ENCODE measurements at regions of chr19 and their contacts with region 1.

Region 1: GRCh38 chr19:6138066-6138465 is 2.6 kb downstream of the ACSBG2 start:
- DNase-seq: no peak
- H3K4me3 ChIP-seq: no peak overlapping the region
- H3K27ac ChIP-seq: no peak overlapping the region
- H3K4me1 ChIP-seq: no peaks in the 10 kb centered on the region
- H3K27me3 ChIP-seq: no peaks in the 10 kb centered on the region
- CTCF ChIP-seq: no peak

Region 2: DNA sequence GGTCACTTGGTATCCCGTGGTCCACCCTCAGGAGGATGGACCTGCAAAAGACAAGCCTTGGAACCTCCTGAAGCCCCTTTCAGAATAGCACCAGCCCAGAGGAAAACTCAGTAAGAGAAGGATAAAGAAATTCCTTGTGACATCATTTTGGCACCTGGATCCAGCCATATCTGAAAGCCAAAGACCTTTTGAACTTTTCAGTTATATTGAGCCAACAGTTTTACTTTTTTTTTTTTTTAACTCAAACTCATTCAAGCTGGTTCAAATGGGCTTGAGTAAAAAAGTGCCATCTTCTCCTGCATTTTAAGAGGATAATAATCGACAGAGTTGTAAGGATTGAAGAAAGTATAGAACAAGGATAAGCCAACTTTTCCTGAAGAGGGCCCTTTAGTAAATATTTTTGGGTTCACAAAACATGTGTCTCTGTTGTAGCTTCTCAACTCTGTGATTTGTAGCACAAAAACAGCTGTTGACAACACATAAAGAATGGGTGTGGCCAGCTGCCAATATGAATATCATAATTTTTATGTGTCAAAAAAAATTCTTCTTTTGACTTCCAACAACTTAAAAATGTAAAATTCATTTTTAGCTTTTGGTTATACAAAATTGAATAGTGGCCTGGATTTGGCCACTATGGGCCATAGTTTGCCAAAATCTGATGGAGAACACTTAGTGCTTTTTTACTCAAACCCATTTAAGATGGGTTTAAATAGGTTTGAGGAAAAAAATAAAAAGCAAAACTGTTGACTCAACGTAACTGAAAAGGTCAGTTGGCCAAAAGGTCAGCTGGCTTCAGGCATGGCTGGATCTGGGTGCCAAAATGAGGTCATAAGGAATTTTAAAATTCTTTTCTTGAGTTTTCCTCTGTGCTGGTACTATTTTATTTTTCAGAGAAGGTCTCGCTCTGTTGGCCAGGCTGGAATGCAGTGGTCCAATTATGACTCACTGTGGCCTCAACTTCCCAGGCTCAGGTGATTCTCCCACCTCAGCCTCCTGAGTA is 48.1 kb after region 1 on chr19:
- CTCF ChIA-PET with region 1: no interaction called
- dilution Hi-C with region 1: no loop called
- in situ Hi-C with region 1: no loop called
- intact Hi-C with region 1: no loop called
- DNase-seq: no peak
- H3K4me3 ChIP-seq: no peak overlapping the region
- H3K27ac ChIP-seq: no peak overlapping the region
- H3K4me1 ChIP-seq: no peaks in the 10 kb centered on the region
- H3K27me3 ChIP-seq: no peaks in the 10 kb centered on the region
- CTCF ChIP-seq: no peak

Region 3: GRCh38 chr19:6228541-6229215 is 90.6 kb after region 1 on chr19:
- CTCF ChIA-PET with region 1: no interaction called
- dilution Hi-C with region 1: loop called (anchors 5 kb)
- in situ Hi-C with region 1: no loop called
- intact Hi-C with region 1: no loop called
- DNase-seq: no peak
- H3K4me3 ChIP-seq: no peak overlapping the region
- H3K27ac ChIP-seq: no peak overlapping the region
- H3K4me1 ChIP-seq: peaks cover 25% of the 10 kb centered on the region
- H3K27me3 ChIP-seq: no peaks in the 10 kb centered on the region
- CTCF ChIP-seq: no peak